ENCODE measurements at regions of chrX and their contacts with region 1.

Region 1: GRCh38 chrX:16436348-16437188 is 213.4 kb upstream of the S100G start:
- DNase-seq: peak; percentile 31
- CTCF ChIP-seq: peak; percentile 58

Region 2: DNA sequence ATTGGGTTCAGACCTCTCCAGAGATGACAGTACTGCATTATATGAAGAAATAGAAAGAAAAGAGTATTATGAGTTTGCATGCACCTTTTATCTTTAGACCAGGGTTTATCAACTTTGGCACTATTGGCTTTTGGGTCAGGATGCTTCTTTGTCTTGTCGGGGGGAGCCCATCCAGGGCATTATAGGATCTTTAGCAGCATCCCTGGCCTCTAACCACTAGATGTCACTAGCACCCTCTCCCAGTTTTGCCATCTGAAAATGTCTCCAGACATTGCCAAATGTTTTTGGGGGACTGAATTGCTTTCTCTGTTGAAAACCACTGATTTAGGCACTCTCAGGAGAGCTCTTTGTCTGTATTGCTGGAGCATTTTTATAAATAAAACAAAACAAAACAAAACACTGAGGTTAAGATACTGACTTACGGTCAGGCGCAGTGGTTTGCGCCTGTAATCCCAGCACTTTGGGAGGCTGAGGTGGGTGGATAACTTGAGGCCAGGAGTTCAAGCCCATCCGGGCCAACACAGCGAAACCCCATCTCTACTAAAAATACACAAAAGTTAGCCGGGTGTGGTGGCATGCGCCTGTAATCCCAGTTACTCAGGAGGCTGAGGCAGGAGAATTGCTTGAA is 674.9 kb before region 1 on chrX:
- in situ Hi-C with region 1: loop called (anchors 25 kb)
- DNase-seq: peak; percentile 58
- CTCF ChIP-seq: peak; percentile 62

Region 3: DNA sequence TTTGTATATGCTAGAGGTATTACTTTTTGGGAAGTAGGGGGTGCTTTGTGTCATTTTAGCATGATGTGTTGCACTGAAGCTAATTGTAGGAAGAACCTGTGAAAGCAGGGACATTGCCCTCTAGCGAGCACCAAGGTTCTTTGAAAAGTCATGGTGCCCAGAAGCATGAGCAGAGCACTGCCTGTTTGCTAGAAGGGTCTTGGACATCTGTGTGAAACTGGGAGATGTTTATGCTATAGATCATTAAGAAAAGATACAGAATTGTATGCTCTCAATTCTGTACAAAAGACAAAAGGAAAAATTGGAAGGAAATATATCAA is 298.5 kb before region 1 on chrX:
- in situ Hi-C with region 1: loop called (anchors 25 kb)
- DNase-seq: no peak
- CTCF ChIP-seq: peak; percentile 21

Region 4: DNA sequence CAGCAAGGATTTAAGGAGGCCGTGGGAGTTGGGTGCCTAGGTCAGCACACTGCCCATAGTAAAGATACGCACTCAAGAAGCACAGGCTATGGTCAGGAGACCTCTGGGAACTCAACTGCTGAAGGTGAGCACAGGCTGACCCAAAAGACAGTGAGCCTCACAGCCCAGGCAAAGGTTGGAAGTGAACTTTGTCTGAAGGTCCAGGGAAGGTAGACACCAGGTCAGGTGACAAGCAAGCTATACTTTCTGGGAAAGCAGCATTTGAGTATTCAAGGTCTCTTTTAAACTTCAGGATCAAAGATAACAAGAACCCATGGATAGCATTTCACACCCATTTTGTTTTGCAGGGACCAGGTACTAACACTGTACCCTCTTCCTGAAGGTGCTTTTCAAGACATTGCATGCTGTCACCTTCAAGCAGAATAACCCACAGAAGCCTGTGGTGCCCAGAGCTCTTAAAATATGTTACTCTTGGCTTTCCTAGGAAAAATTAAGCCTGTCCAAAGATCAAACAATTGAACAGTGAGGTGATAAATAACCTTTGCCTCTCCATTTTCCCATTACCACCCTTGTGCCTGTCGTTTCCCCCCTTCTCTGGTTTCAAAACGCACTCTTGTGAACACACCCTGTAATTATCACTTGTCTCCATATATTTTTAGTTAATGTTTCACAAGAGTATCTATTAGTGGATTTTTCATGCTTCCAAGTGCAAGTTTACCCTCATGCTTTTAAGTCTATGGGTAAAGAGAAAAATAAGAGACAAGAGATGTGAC is 210.0 kb after region 1 on chrX:
- in situ Hi-C with region 1: no loop called
- DNase-seq: no peak
- CTCF ChIP-seq: no peak